Activated CD4-positive, alpha-beta T cell treated with anti-CD3 and anti-CD28 coated beads for 36 hours (primary cell): ENCODE measurements at regions of chr1 and their contacts with region 1.

Region 1: GRCh38 chr1:9588551-9589143 is at the start of gene TMEM201:
- DNase-seq: peak; percentile 97
- ATAC-seq: peak; percentile 92
- H3K4me3 Mint-ChIP-seq: peak within 1 kb of the TSS; percentile 80
- H3K27ac Mint-ChIP-seq: peak within 1 kb of the TSS; percentile 79
- H3K4me1 Mint-ChIP-seq: peaks cover 26% of the 10 kb centered on the region
- H3K27me3 Mint-ChIP-seq: no peaks in the 10 kb centered on the region
- total RNA-seq, gene TMEM201: 14.6 to 15.1 TPM

Region 2: GRCh38 chr1:9045861-9046510 is 542.7 kb before region 1 on chr1:
- CTCF ChIA-PET with region 1: no interaction called
- POLR2A ChIA-PET with region 1: no interaction called
- intact Hi-C with region 1: no loop called
- DNase-seq: no peak
- ATAC-seq: no peak
- H3K4me3 Mint-ChIP-seq: no peak overlapping the region
- H3K27ac Mint-ChIP-seq: no peak overlapping the region
- H3K4me1 Mint-ChIP-seq: no peaks in the 10 kb centered on the region
- H3K27me3 Mint-ChIP-seq: no peaks in the 10 kb centered on the region

Region 3: GRCh38 chr1:9128520-9129265 is 460.0 kb before region 1 on chr1 and contains the start of gene GPR157:
- CTCF ChIA-PET with region 1: no interaction called
- POLR2A ChIA-PET with region 1: no interaction called
- intact Hi-C with region 1: loop called in 1 of 2 experiments (anchors 1 kb)
- DNase-seq: peak; percentile 93
- ATAC-seq: peak; percentile 84
- H3K4me3 Mint-ChIP-seq: peak within 1 kb of the TSS; percentile 83
- H3K27ac Mint-ChIP-seq: peak within 1 kb of the TSS; percentile 67
- H3K4me1 Mint-ChIP-seq: peaks cover 37% of the 10 kb centered on the region
- H3K27me3 Mint-ChIP-seq: no peaks in the 10 kb centered on the region
- total RNA-seq, gene GPR157: 2.7 to 3.6 TPM

Region 4: GRCh38 chr1:9428601-9429341 is 159.9 kb before region 1 on chr1:
- CTCF ChIA-PET with region 1: no interaction called
- POLR2A ChIA-PET with region 1: no interaction called
- intact Hi-C with region 1: loop called in 1 of 2 experiments (anchors 1 kb)
- DNase-seq: peak; percentile 100
- ATAC-seq: peak; percentile 91
- H3K4me3 Mint-ChIP-seq: peak overlapping the region; percentile 86
- H3K27ac Mint-ChIP-seq: peak overlapping the region; percentile 98
- H3K4me1 Mint-ChIP-seq: peaks cover 47% of the 10 kb centered on the region
- H3K27me3 Mint-ChIP-seq: no peaks in the 10 kb centered on the region

Region 5: GRCh38 chr1:9615316-9616063 is 26.8 kb after region 1 on chr1:
- CTCF ChIA-PET with region 1: interaction called, 12 read pairs
- POLR2A ChIA-PET with region 1: no interaction called
- intact Hi-C with region 1: no loop called
- DNase-seq: peak; percentile 79
- ATAC-seq: peak; percentile 93
- H3K4me3 Mint-ChIP-seq: no peak overlapping the region
- H3K27ac Mint-ChIP-seq: no peak overlapping the region
- H3K4me1 Mint-ChIP-seq: no peaks in the 10 kb centered on the region
- H3K27me3 Mint-ChIP-seq: peaks cover 3% of the 10 kb centered on the region

Region 6: DNA sequence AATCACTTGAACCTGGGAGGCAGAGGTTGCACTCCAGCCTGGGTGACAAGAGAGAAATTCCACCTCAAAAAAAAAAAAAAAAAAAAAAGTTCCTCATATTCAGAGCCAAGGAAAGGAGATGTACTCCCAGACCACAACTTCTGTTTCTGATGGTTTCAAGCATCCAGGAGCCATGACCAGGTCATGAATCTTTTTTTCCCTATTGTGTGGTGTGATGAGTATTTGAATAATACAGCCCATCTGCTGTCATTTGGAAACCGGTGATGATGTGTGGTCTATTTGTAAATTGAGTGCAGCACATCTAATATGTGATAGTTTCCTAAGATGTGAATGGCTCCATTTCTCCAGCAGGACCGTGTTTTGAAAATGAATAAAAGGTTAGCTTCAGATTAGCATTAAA is 81.4 kb after region 1 on chr1:
- CTCF ChIA-PET with region 1: no interaction called
- POLR2A ChIA-PET with region 1: no interaction called
- intact Hi-C with region 1: no loop called
- DNase-seq: peak; percentile 53
- ATAC-seq: peak; percentile 70
- H3K4me3 Mint-ChIP-seq: no peak overlapping the region
- H3K27ac Mint-ChIP-seq: peak overlapping the region; percentile 86
- H3K4me1 Mint-ChIP-seq: peaks cover 78% of the 10 kb centered on the region
- H3K27me3 Mint-ChIP-seq: no peaks in the 10 kb centered on the region

Region 7: GRCh38 chr1:9689011-9689706 is 100.5 kb after region 1 on chr1:
- CTCF ChIA-PET with region 1: no interaction called
- POLR2A ChIA-PET with region 1: no interaction called
- intact Hi-C with region 1: loop called in 1 of 2 experiments (anchors 1 kb)
- DNase-seq: peak; percentile 93
- ATAC-seq: peak; percentile 78
- H3K4me3 Mint-ChIP-seq: peak overlapping the region; percentile 70
- H3K27ac Mint-ChIP-seq: peak overlapping the region; percentile 77
- H3K4me1 Mint-ChIP-seq: peaks cover 70% of the 10 kb centered on the region
- H3K27me3 Mint-ChIP-seq: no peaks in the 10 kb centered on the region

Region 8: DNA sequence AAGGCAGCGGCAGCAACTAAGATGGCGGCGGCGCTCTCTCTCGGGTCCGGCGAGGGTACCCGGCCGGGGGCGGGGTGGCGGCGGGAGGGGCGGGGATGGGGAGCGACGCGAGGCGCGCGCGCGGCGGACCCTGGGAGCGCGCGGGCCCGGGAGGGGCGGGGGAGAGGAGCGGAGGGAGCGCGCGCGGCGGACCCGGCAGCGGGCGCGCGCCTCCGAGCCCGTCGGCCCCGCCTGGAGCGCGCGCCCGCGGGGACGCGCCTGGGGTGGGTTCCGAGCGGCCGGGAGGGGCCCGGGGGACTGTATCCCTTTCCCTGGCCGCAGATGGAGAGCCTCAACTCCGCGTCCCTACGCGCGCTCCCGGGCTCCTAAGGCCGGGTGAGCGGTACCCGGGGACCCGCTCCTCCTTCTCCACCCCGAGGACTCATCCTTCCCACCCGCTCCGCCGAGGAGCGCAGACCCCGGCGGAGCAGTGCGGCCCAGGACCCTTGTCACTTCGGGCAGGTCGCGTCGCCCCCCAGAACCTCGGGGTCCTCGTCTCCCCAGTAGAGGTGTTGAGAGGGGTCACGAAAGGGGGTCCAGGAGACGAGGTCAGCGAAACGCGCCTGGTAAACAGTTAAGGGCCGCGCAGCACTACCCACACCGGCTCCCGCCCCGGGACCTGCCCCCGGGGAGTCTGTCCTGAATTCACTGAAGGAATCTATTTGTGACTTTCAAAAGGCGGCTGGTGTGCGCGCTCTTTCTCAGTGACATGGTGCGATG is 235.5 kb after region 1 on chr1 and contains the start of gene CLSTN1:
- CTCF ChIA-PET with region 1: interaction called, 4 read pairs
- POLR2A ChIA-PET with region 1: no interaction called
- intact Hi-C with region 1: loop called in 1 of 2 experiments (anchors 1 kb)
- DNase-seq: peak; percentile 96
- ATAC-seq: peak; percentile 72
- H3K4me3 Mint-ChIP-seq: peak within 1 kb of the TSS; percentile 96
- H3K27ac Mint-ChIP-seq: peak within 1 kb of the TSS; percentile 89
- H3K4me1 Mint-ChIP-seq: peaks cover 35% of the 10 kb centered on the region
- H3K27me3 Mint-ChIP-seq: peaks cover 9% of the 10 kb centered on the region
- total RNA-seq, gene CLSTN1: 34.9 to 36.7 TPM

Region 9: GRCh38 chr1:10045480-10046355 is 457.1 kb after region 1 on chr1:
- CTCF ChIA-PET with region 1: no interaction called
- POLR2A ChIA-PET with region 1: no interaction called
- intact Hi-C with region 1: no loop called
- DNase-seq: no peak
- ATAC-seq: no peak
- H3K4me3 Mint-ChIP-seq: no peak overlapping the region
- H3K27ac Mint-ChIP-seq: no peak overlapping the region
- H3K4me1 Mint-ChIP-seq: peaks cover 30% of the 10 kb centered on the region
- H3K27me3 Mint-ChIP-seq: no peaks in the 10 kb centered on the region

Region 10: DNA sequence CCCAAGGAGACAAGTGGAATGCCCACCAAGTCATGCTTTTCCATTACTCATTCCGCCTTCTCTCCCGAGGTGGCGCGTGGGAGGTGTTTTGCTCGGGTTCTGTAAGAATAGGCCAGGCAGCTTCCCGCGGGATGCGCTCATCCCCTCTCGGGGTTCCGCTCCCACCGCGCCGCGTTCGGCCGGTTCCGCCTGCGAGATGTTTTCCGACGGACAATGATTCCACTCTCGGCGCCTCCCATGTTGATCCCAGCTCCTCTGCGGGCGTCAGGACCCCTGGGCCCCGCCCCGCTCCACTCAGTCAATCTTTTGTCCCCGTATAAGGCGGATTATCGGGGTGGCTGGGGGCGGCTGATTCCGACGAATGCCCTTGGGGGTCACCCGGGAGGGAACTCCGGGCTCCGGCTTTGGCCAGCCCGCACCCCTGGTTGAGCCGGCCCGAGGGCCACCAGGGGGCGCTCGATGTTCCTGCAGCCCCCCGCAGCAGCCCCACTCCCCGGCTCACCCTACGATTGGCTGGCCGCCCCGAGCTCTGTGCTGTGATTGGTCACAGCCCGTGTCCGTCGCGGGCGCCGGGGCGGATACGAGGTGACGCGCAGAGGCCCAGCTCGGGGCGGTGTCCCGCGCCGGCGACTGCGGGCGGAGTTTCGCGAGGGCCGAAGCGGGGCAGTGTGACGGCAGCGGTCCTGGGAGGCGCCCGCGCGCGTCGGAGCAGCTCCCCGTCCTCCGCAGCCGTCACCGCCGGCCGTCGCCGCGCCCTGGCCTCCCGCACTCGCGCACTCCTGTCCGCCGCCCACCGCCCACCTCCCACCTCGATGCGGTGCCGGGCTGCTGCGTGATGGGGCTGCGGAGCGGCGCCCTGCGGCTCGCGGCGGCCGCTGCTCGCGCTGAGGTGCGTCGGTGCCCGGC is 621.5 kb after region 1 on chr1 and contains the start of gene KIF1B:
- CTCF ChIA-PET with region 1: no interaction called
- POLR2A ChIA-PET with region 1: no interaction called
- intact Hi-C with region 1: loop called in 1 of 2 experiments (anchors 1 kb)
- DNase-seq: peak; percentile 97
- ATAC-seq: peak; percentile 98
- H3K4me3 Mint-ChIP-seq: peak within 1 kb of the TSS; percentile 76
- H3K27ac Mint-ChIP-seq: peak within 1 kb of the TSS; percentile 74
- H3K4me1 Mint-ChIP-seq: peaks cover 31% of the 10 kb centered on the region
- H3K27me3 Mint-ChIP-seq: no peaks in the 10 kb centered on the region
- total RNA-seq, gene KIF1B: 12.3 to 13.5 TPM